ENCODE measurements at regions of chr12 and their contacts with region 1.

Region 1: GRCh38 chr12:110932046-110932445 is 11.7 kb upstream of the MYL2 start:
- DNase-seq: no peak
- ATAC-seq: no peak

Region 2: DNA sequence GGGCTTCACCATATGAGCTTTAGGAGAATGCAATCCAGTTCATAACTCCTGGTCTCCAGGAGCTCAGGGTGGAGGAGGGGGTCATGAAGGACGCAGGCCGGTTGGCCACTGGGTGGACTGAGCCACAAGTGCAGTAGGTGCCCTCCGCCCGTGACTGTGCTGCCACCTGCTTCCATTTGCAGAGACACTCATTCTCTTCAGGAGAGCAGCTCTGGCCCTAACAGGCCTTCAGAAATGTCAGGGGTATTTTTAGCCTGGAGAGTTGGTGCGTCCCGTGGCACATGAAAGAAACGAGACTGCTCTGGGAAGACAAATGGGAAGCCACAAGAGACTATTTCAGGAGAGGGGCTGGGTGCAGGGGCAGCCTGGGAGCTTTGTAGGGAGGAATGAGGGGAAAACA is 63.0 kb after region 1 on chr12:
- intact Hi-C with region 1: loop called (anchors 1 kb)
- DNase-seq: no peak
- ATAC-seq: peak; percentile 85

Region 3: GRCh38 chr12:111363642-111363977 is 431.6 kb after region 1 on chr12:
- intact Hi-C with region 1: loop called (anchors 5 kb)
- DNase-seq: no peak
- ATAC-seq: no peak

Measured in Right ventricle myocardium inferior (tissue), 1 donor.